ENCODE measurements at regions of chr1 and their contacts with region 1.

Region 1: GRCh38 chr1:204806943-204807687 is 63.5 kb upstream of the NFASC start:
- DNase-seq: peak; percentile 87 to 91 (median 89)
- H3K4me3 ChIP-seq: peak overlapping the region in 6 of 7 experiments; percentile 16 to 84 (median 66)
- H3K27ac ChIP-seq: no peak overlapping the region
- H3K4me1 ChIP-seq: peaks cover 3 to 20% (median 10%) of the 10 kb centered on the region in 4 experiments
- H3K27me3 ChIP-seq: no peaks in the 10 kb centered on the region

Region 2: DNA sequence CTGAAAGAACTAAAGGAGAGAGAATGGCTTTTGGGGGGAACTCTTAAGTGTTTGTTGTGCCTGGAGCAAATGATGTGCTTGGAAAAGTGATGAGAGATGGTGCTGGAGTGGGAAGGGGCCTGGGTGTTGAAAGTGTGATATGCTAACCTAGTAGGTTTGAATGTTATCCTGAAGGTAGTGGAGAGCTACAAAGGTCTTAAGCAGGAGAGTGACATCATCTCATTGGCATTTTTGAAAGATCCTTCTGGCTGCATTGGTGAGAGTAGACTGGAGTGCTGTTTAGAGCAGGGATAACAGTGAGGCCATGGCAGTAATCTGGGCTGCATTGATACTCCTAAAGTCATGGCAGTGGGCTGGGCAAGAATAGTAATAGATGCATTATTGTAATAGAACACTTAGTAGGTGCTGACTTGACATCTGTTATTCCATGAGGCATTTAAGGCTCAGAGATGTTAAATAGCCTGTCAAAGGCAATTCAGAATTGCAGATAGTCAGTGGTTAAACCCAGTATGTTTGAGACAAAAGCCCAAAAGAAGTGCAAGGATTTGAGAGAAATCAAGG is 246.4 kb before region 1 on chr1:
- CTCF ChIA-PET with region 1: interaction called, 168 read pairs
- POLR2A ChIA-PET with region 1: interaction called, 4 read pairs
- DNase-seq: no peak
- H3K4me3 ChIP-seq: no peak overlapping the region
- H3K27ac ChIP-seq: no peak overlapping the region
- H3K4me1 ChIP-seq: no peaks in the 10 kb centered on the region
- H3K27me3 ChIP-seq: no peaks in the 10 kb centered on the region

Region 3: GRCh38 chr1:204746838-204747442 is 60.2 kb before region 1 on chr1:
- CTCF ChIA-PET with region 1: interaction called, 15 read pairs
- POLR2A ChIA-PET with region 1: no interaction called
- DNase-seq: peak; percentile 25 to 65 (median 59)
- H3K4me3 ChIP-seq: no peak overlapping the region
- H3K27ac ChIP-seq: no peak overlapping the region
- H3K4me1 ChIP-seq: no peaks in the 10 kb centered on the region
- H3K27me3 ChIP-seq: peaks cover 0 to 10% (median 0%) of the 10 kb centered on the region in 5 experiments

Region 4: GRCh38 chr1:204782118-204782700 is 24.9 kb before region 1 on chr1:
- CTCF ChIA-PET with region 1: interaction called, 138 read pairs
- POLR2A ChIA-PET with region 1: no interaction called
- DNase-seq: no peak
- H3K4me3 ChIP-seq: no peak overlapping the region
- H3K27ac ChIP-seq: no peak overlapping the region
- H3K4me1 ChIP-seq: no peaks in the 10 kb centered on the region
- H3K27me3 ChIP-seq: peaks cover 0 to 4% (median 0%) of the 10 kb centered on the region in 5 experiments

Region 5: GRCh38 chr1:204819495-204819894 is 12.4 kb after region 1 on chr1:
- CTCF ChIA-PET with region 1: interaction called, 67 read pairs
- POLR2A ChIA-PET with region 1: no interaction called
- DNase-seq: no peak
- H3K4me3 ChIP-seq: no peak overlapping the region
- H3K27ac ChIP-seq: no peak overlapping the region
- H3K4me1 ChIP-seq: no peaks in the 10 kb centered on the region
- H3K27me3 ChIP-seq: peaks cover 0 to 12% (median 6%) of the 10 kb centered on the region in 5 experiments

Measured in common myeloid progenitor, CD34-positive (primary cell).